GM10248 (cell line): ENCODE measurements at regions of chr15 and their contacts with region 1.

Region 1: GRCh38 chr15:45166834-45167630 is 20.7 kb downstream of the SHF start:
- DNase-seq: peak; percentile 90
- CTCF ChIP-seq: peak; percentile 73

Region 2: GRCh38 chr15:45064386-45064785 is 102.6 kb before region 1 on chr15:
- CTCF ChIA-PET with region 1: no interaction called
- POLR2A ChIA-PET with region 1: no interaction called
- DNase-seq: no peak
- CTCF ChIP-seq: no peak

Region 3: DNA sequence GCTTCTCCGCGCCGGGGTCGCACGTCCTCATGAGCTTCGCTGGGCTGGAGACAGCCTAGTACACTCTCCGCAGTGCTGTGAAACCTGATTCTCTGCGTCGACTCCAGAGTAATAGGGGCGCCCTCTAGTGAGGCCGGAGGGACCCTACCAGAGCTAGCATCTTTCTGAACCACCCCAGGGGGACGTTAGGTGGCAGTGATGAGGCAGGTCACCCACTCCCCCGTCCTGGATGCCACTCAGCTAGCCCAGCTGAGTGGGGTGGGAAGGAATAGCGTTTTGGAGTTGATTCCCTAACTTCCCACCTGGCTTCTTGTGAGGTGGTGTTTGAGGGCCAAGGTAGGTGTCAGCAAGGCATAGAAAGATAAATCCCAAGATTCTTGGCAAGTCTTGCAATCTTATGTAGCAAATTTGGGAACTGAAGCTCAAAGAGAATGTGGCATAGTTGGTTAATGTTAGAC is 48.9 kb before region 1 on chr15:
- CTCF ChIA-PET with region 1: interaction called, 26 read pairs
- POLR2A ChIA-PET with region 1: no interaction called
- DNase-seq: peak; percentile 92
- CTCF ChIP-seq: peak; percentile 99

Region 4: GRCh38 chr15:45148076-45149059 is 18.7 kb before region 1 on chr15:
- CTCF ChIA-PET with region 1: interaction called, 27 read pairs
- POLR2A ChIA-PET with region 1: no interaction called
- DNase-seq: no peak
- CTCF ChIP-seq: no peak

Region 5: DNA sequence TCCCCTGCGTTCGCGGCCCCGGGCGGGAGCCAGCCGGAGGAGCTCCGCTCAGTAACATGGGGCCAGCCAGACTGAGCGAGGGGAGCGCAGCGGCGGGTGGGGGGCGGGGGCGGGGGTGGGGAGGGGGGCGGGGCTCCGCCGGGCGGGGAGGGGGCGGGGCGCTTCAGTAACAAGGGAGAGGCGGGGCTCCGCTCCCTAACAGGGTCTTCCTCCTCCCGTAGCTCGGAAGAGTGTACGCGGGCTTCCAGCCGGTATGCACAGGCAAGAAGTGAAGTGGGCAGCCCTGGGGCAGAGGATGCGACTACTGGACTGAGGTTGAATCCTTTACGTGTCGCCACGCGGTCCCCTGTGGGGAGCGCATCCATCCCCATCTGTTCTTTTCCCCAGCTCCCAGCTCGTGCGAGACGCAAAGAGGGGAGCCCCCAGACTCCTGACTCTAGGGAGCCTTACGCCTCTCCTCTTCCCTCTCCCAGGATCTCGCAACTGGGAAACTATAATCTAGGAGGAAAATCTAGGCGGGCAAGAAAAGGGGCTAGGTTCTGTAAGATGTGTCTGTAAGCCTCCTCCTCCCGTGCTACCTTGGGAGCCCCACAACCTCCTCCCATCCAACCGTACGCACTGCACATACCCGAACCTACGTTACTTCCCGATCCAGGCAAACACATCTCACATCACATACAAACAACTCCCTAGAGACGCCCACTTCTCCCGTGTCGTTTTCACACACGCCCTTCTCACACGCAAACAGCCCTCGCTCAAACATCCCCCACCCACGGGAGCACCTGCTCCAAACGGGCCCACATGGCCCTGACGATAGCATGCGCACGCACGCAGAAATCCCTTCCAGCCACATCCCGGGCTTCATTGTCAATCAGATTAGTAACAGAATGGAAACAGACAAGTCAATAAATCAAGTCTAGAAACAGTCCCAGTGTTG is 21.1 kb after region 1 on chr15 and contains the start of gene SHF:
- CTCF ChIA-PET with region 1: interaction called, 234 read pairs
- POLR2A ChIA-PET with region 1: interaction called, 6 read pairs
- DNase-seq: peak; percentile 84
- CTCF ChIP-seq: no peak

Region 6: DNA sequence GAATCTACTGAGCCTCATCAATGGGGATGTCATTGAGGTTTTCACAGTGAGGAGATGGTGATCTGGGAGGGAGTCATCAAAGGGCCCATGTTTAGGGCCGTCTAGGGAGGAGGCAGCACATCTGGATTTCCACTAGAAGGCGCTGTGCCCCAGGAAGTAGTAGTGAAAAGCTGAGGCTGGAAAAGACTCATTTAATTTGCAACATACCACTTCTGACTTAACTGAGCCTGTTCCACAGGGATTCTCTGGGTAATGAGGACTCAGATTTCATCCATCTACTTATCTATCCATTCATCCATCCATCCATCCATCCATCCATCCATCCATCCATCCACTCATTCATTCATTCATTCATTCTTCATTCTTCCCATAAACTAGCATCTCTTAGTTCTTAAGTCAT is 38.2 kb after region 1 on chr15:
- CTCF ChIA-PET with region 1: interaction called, 49 read pairs
- POLR2A ChIA-PET with region 1: interaction called, 11 read pairs
- DNase-seq: peak; percentile 69
- CTCF ChIP-seq: peak; percentile 86

Region 7: DNA sequence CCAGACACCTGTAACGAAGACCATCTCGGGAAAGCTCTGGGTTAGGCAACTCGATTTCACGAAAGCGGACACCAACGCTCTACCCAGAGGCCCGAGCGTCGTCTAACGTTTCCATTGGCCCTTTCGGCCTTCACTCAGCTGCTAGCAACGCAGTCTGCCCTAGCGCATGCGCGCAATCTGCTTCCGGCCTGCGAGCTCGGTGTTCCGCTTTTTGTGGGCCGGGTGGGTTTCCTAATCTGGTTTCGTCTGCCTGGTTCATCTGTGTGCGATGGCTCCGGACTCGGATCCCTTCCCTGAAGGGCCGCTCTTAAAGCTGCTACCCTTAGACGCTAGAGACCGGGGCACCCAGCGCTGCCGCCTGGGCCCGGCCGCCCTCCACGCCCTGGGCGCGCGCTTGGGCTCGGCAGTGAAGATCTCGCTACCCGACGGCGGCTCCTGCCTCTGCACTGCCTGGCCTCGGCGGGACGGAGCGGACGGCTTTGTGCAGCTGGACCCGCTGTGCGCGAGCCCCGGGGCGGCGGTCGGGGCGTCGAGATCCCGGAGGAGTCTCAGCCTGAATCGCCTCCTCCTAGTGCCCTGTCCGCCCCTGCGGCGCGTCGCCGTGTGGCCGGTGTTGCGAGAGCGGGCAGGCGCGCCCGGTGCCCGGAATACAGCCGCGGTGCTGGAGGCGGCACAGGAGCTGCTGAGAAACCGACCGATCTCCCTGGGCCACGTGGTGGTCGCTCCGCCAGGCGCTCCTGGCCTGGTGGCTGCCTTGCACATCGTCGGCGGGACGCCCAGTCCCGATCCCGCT is 235.3 kb after region 1 on chr15:
- CTCF ChIA-PET with region 1: interaction called, 44 read pairs
- POLR2A ChIA-PET with region 1: interaction called, 3 read pairs
- DNase-seq: peak; percentile 96
- CTCF ChIP-seq: no peak

Region 8: GRCh38 chr15:45457641-45458433 is 290.8 kb after region 1 on chr15:
- CTCF ChIA-PET with region 1: interaction called, 16 read pairs
- POLR2A ChIA-PET with region 1: interaction called, 3 read pairs
- DNase-seq: peak; percentile 67
- CTCF ChIP-seq: peak; percentile 72